Aorta (tissue), 5 donors: ENCODE measurements at regions of chr5 and their contacts with region 1.

Region 1: GRCh38 chr5:74684900-74685851 is at the start of gene HEXB:
- DNase-seq: peak; percentile 96 to 97
- ATAC-seq: peak; percentile 97
- H3K4me3 ChIP-seq: peak within 1 kb of the TSS; percentile 53 to 78
- H3K27ac ChIP-seq: peak within 1 kb of the TSS in 1 of 2 donors; percentile 50
- H3K4me1 ChIP-seq: peaks cover 0 to 4% of the 10 kb centered on the region in 2 donors
- H3K27me3 ChIP-seq: no peaks in the 10 kb centered on the region
- total RNA-seq, gene HEXB: 122 to 172 TPM

Region 2: DNA sequence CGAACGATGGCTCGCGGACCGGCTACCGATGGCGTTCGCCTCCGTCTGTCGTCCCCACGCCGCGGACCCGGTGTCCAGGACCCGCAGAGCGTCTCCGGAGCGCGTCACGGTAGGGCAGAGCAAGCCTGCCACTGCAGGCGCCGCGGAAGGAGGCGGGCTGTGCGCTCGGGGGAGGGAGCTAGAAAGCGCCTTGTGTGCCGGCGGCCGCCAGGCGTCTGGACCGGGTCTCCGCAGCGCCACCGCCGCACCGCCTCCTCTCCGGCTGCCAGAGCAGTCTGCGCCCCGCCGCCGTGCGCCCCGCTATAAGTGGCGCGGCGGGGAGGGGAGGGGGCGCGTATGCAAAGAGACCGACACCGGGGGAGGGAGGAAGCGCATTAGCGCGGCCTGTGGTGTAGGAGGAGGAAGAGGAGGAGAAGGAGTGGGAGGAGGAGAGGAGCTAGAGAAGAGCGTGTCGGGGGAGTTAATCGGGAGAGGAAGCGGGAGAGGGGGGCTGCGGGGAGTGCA is 44.7 kb before region 1 on chr5 and contains the start of gene ENC1:
- intact Hi-C with region 1: no loop called
- DNase-seq: peak; percentile 92 to 95
- ATAC-seq: peak; percentile 94
- H3K4me3 ChIP-seq: peak within 1 kb of the TSS; percentile 30 to 54
- H3K27ac ChIP-seq: no peak within 1 kb of the TSS
- H3K4me1 ChIP-seq: no peaks in the 10 kb centered on the region
- H3K27me3 ChIP-seq: no peaks in the 10 kb centered on the region
- total RNA-seq, gene ENC1: 4.8 to 10.6 TPM

Region 3: DNA sequence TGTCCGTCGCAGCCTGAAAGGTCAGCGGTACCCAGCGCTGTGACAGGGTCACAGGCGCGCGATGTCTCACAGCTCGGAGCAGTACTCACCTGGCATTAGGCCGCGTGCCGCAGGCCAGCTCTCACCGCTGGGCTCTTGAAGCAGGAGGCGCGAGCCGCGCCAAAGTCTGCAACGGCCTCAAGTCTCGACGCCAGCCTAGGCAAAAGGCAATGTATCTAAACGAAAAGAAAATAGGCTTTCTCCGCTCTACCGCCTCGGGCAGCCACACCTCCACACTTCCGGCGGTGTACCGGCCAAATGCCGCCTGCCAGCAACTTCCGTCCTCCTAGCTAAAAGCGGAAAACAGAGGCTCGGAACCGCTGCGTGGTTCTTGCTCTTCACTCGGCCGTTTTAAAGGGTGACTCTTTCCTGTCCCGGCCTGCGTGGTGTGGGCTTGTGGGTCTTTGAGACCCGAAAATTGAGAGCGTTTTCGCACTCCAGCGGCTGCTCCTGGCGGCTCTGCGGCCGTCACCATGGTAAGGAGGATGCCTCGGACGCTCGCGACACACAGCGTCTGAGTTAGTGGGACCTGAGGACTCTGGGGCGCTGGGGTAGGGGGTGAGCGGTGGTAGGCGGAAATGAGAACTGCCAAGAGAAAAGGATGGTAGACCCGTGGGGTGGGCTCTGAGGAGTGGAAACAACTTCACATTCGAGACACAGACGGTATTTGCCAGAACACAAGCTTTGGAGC is 81.8 kb after region 1 on chr5 and contains the starts of genes GFM2 and NSA2:
- intact Hi-C with region 1: loop called in 1 of 2 experiments (anchors 2 kb)
- DNase-seq: peak; percentile 94 to 96
- ATAC-seq: peak; percentile 99
- H3K4me3 ChIP-seq: peak within 1 kb of the TSS; percentile 73 to 99
- H3K27ac ChIP-seq: peak within 1 kb of the TSS in 1 of 2 donors; percentile 43
- H3K4me1 ChIP-seq: no peaks in the 10 kb centered on the region
- H3K27me3 ChIP-seq: no peaks in the 10 kb centered on the region
- total RNA-seq, gene GFM2: 18.2 to 18.6 TPM
- total RNA-seq, gene NSA2: 50.9 to 57.9 TPM

Region 4: GRCh38 chr5:74778609-74779008 is 93.4 kb after region 1 on chr5:
- intact Hi-C with region 1: no loop called
- DNase-seq: no peak
- ATAC-seq: no peak
- H3K4me3 ChIP-seq: no peak overlapping the region
- H3K27ac ChIP-seq: no peak overlapping the region
- H3K4me1 ChIP-seq: no peaks in the 10 kb centered on the region
- H3K27me3 ChIP-seq: no peaks in the 10 kb centered on the region